ENCODE measurements at regions of chr17 and their contacts with region 1.

Region 1: GRCh38 chr17:77109764-77110359 is 30.9 kb upstream of the SEC14L1 start:
- DNase-seq: peak; percentile 99
- H3K4me3 ChIP-seq: no peak overlapping the region
- H3K27ac ChIP-seq: peak overlapping the region; percentile 99
- H3K4me1 ChIP-seq: peaks cover 43% of the 10 kb centered on the region
- H3K27me3 ChIP-seq: no peaks in the 10 kb centered on the region
- CTCF ChIP-seq: peak in 1 of 2 donors; percentile 23
- POLR2A ChIP-seq: no peak

Region 2: DNA sequence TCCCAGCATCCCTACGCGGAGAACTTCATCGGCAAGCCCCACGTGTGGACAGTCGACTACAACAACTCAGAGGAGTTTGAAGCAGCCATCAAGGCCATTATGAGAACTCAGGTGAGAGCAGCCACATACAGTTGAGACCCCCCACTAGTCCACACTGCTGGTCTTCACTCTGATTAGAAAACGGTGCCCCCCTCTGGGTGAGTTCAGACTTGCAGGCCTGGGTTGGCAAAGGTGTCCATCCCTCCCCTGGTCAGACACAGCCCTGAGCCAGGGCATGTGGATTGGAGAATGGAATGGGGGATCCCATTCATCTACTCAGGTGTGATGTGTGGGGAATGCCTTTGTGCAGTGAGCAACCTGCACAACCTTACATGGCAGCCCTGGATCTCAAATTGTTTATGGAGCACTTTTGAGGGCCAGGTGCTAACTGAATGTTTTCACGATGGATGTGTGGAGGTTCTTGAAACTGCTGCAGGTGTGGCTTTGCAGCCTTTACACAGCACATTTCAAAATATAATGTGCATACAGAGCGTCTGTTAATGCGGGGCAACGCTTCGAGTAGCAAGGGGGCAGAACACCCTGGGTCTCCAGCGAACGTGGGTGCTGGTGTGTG is 169.0 kb before region 1 on chr17:
- CTCF ChIA-PET with region 1: no interaction called
- POLR2A ChIA-PET with region 1: no interaction called
- dilution Hi-C with region 1: no loop called
- intact Hi-C with region 1: no loop called
- DNase-seq: peak; percentile 8
- H3K4me3 ChIP-seq: no peak overlapping the region
- H3K27ac ChIP-seq: no peak overlapping the region
- H3K4me1 ChIP-seq: no peaks in the 10 kb centered on the region
- H3K27me3 ChIP-seq: no peaks in the 10 kb centered on the region
- CTCF ChIP-seq: peak; percentile 12 to 33
- POLR2A ChIP-seq: no peak

Region 3: GRCh38 chr17:77096570-77097214 is 13.2 kb before region 1 on chr17:
- CTCF ChIA-PET with region 1: interaction called, 6 read pairs
- POLR2A ChIA-PET with region 1: no interaction called
- dilution Hi-C with region 1: no loop called
- intact Hi-C with region 1: loop called (anchors 1 kb)
- DNase-seq: peak; percentile 78
- H3K4me3 ChIP-seq: no peak overlapping the region
- H3K27ac ChIP-seq: peak overlapping the region; percentile 86
- H3K4me1 ChIP-seq: peaks cover 50% of the 10 kb centered on the region
- H3K27me3 ChIP-seq: no peaks in the 10 kb centered on the region
- CTCF ChIP-seq: peak; percentile 47 to 58
- POLR2A ChIP-seq: peak; percentile 35

Region 4: GRCh38 chr17:77140166-77140878 is 30.5 kb after region 1 on chr17:
- CTCF ChIA-PET with region 1: interaction called, 15 read pairs
- POLR2A ChIA-PET with region 1: interaction called, 13 read pairs
- dilution Hi-C with region 1: no loop called
- intact Hi-C with region 1: loop called (anchors 1 kb)
- DNase-seq: peak; percentile 99
- H3K4me3 ChIP-seq: peak overlapping the region in 2 of 3 experiments; percentile 12 to 19
- H3K27ac ChIP-seq: peak overlapping the region; percentile 94
- H3K4me1 ChIP-seq: peaks cover 46% of the 10 kb centered on the region
- H3K27me3 ChIP-seq: no peaks in the 10 kb centered on the region
- CTCF ChIP-seq: peak in 1 of 2 donors; percentile 8
- POLR2A ChIP-seq: peak; percentile 87

Region 5: DNA sequence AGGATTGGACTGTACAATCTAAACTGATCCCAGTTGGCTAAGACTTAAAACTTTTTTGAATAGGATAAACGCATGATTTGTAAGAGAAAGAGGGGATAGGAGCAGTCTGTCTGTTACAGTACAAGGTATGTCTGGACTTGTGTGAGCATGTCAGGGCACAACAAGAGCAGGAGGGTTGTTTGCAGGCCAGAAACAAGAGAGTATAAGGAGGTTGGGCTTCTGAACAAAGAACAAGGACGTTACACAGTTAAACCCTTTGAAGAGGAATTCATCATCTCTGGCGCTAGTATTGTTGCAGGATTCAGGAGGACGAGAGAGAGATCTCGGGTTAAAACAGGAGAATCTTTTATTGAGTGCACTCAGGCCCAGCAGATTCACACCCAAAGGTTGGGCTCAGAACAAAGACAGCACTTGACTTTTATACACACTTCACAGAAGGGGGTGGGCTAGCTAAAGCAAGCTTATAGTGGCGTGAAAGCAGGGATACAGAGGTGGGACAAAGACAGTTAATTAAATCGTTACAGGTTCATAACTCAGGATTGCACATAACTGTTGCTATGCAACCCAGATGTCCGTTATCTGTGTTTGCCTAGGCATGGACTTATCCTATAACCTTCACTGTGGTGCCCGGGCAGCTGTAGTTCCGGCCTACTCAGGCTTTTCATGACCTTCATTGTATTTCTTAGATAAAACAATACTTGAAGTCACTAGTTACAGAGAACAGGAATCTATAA is 65.2 kb after region 1 on chr17:
- CTCF ChIA-PET with region 1: no interaction called
- POLR2A ChIA-PET with region 1: no interaction called
- dilution Hi-C with region 1: no loop called
- intact Hi-C with region 1: loop called (anchors 1 kb)
- DNase-seq: peak; percentile 91
- H3K4me3 ChIP-seq: no peak overlapping the region
- H3K27ac ChIP-seq: peak overlapping the region; percentile 88
- H3K4me1 ChIP-seq: peaks cover 67% of the 10 kb centered on the region
- H3K27me3 ChIP-seq: no peaks in the 10 kb centered on the region
- CTCF ChIP-seq: no peak
- POLR2A ChIP-seq: peak; percentile 74

Measured in endothelial cell of umbilical vein (primary cell).